ENCODE measurements at regions of chr3 and their contacts with region 1.

Region 1: DNA sequence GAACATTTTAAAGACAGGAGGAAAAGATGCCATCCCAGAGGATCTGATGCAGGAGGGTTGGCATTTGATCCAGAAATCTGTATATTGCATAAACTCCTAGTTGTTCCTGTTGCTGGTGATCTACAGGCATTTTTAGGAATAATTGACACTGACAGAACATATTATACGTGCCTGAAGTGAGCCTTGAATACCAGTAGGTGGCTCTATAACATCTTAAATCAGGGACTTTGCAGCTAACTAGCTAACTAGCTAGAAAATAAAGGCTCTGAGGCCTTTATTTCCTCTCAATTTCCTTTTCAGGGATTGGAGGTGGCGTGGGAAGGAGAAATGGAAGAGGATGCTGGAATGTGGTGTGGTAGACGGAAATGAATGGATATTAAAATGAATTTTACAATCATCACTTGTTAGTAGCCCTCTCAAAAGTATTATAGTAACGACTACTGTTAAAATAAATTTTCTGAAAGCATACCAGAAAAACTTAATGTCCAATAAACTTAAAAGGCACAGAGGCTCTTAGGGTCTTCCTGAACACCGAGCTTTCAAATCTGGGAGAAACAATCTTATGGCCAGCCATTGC is 73.9 kb upstream of the ZBED2 start:
- DNase-seq: no peak

Region 2: DNA sequence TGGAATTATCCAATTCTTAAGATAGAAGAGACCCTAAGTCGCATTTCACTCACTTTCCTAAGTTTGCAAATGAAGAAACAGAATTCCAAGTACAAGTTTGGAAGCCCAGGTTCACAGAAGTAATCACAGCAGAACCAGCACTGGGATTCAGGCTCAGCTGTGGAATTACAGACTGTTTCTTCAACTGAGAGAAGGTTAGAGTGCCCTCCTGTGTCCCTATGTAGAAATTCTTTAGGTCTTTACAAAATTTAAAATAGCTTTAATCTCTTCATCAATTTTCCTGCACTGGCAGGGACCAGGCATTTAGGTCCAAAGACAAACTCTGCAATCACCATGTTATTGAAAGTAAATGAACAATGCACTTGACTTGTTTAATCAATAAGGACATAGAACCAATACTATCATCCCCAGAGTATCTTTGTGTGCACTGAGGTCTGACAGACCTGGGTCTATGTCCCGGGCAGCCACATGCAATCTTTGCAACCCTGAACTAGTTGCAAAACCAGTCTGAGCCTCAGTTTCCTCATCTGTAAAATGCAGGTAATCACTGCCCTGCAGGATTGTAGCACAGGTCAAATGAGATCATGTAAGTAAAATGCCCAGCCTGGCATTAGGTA is 22.4 kb after region 1 on chr3:
- intact Hi-C with region 1: loop called (anchors 2 kb)
- DNase-seq: no peak

Measured in posterior cingulate gyrus (tissue), 11 donors.